Psoas muscle (tissue), 8 donors: ENCODE measurements at regions of chr6 and their contacts with region 1.

Region 1: DNA sequence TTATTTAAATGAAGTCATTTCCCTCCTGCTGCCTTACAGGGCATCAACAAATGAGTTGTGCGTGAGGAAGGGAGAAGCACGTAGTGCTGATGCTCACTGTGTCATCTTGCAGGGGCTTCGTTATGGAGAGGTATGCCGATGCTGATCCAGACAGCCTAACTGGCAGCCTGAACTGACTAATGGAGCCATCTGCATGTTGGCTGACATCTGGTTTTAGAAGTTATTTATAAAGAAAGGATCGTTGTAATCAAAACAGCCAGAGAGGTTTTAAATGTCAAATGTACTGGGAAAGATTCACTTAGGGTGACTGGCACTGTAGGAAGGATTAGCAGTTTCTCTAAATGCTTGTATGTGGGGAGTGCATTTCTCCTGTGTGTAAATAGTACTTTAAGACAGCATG is 54.6 kb downstream of the FARS2 start:
- DNase-seq: peak in 1 of 2 donors; percentile 49
- ATAC-seq: peak; percentile 83 to 96 (median 90)
- H3K4me3 ChIP-seq: peak overlapping the region; percentile 35
- H3K27ac ChIP-seq: peak overlapping the region; percentile 66
- H3K4me1 ChIP-seq: peaks cover 18% of the 10 kb centered on the region
- H3K27me3 ChIP-seq: no peaks in the 10 kb centered on the region
- CTCF ChIP-seq: no peak

Region 2: GRCh38 chr6:5351552-5352210 is 35.8 kb after region 1 on chr6:
- intact Hi-C with region 1: no loop called
- DNase-seq: no peak
- ATAC-seq: no peak
- H3K4me3 ChIP-seq: no peak overlapping the region
- H3K27ac ChIP-seq: no peak overlapping the region
- H3K4me1 ChIP-seq: no peaks in the 10 kb centered on the region
- H3K27me3 ChIP-seq: no peaks in the 10 kb centered on the region
- CTCF ChIP-seq: no peak

Region 3: GRCh38 chr6:5384276-5384675 is 68.4 kb after region 1 on chr6:
- intact Hi-C with region 1: loop called in 1 of 2 experiments (anchors 2 kb)
- DNase-seq: no peak
- ATAC-seq: no peak
- H3K4me3 ChIP-seq: no peak overlapping the region
- H3K27ac ChIP-seq: no peak overlapping the region
- H3K4me1 ChIP-seq: peaks cover 6% of the 10 kb centered on the region
- H3K27me3 ChIP-seq: no peaks in the 10 kb centered on the region
- CTCF ChIP-seq: no peak